ENCODE measurements at regions of chr14 and their contacts with region 1.

Region 1: GRCh38 chr14:67666750-67667449 is 7.5 kb downstream of the VTI1B start:
- DNase-seq: peak; percentile 51
- H3K27ac ChIP-seq: no peak overlapping the region
- CTCF ChIP-seq: peak; percentile 64

Region 2: GRCh38 chr14:67619446-67620216 is 47.3 kb before region 1 on chr14 and contains the start of gene ARG2:
- CTCF ChIA-PET with region 1: interaction called, 28 read pairs
- POLR2A ChIA-PET with region 1: no interaction called
- DNase-seq: peak; percentile 95
- H3K27ac ChIP-seq: peak within 1 kb of the TSS; percentile 61
- CTCF ChIP-seq: 0 out of 2 replicates have a peak, but pooled peaks have one; percentile 19

Region 3: DNA sequence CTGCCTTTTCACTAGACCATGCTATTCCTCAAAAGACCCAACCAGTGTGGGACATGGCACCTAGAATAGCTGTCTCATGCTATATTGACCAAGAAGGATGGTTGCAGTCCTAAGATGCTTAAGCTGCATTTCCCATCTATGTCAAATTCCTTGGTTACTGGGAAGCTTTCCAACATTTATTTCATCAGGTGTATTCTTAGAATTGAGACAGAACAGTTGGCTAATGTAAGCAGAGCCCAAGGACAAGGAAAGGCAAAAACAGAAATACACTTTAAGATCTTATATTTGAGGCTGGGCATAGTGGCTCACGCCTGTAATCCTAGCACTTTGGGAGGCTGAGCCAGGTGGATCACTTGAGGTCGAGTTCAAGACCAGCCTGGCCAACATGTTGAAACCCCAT is 22.5 kb before region 1 on chr14:
- CTCF ChIA-PET with region 1: no interaction called
- POLR2A ChIA-PET with region 1: no interaction called
- DNase-seq: no peak
- H3K27ac ChIP-seq: no peak overlapping the region
- CTCF ChIP-seq: no peak

Region 4: DNA sequence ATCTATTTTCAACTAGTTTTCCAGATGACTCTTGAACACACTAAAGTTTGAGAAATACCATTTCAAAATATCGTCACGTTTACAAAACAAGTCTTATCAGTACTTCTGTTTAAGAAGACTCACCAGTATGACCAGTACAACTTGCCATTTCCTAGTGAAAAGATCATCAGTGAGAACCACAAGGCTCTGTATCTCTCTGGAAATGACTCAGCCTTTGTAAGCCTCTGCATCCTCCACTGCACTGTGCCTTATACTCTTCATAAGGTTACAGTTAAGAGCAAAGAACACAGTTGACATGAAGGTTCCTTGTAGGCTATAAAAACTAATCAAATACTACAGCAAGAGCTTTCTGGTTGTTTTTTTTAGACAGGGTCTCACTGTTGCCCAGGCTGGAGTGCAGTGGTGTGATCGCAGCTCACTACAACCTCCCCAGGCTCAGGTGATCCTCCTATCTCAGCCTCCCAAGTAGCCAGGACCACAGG is 13.3 kb after region 1 on chr14:
- CTCF ChIA-PET with region 1: no interaction called
- POLR2A ChIA-PET with region 1: no interaction called
- DNase-seq: peak; percentile 49
- H3K27ac ChIP-seq: peak overlapping the region; percentile 30; the same call in 1 of the 2 replicates
- CTCF ChIP-seq: no peak